ENCODE measurements at regions of chr9 and their contacts with region 1.

Region 1: GRCh38 chr9:113410207-113410864 is at the starts of genes C9orf43 and POLE3:
- DNase-seq: peak; percentile 92 to 98 (median 94)
- ATAC-seq: peak; percentile 94
- H3K4me3 ChIP-seq: peak within 1 kb of the TSS; percentile 88
- H3K27ac ChIP-seq: peak within 1 kb of the TSS; percentile 87
- H3K4me1 ChIP-seq: peaks cover 12 to 22% of the 10 kb centered on the region in 2 experiments; a peak in 4 of 5 replicates
- H3K27me3 ChIP-seq: no peaks in the 10 kb centered on the region
- CTCF ChIP-seq: peak in 1 of 3 experiments; percentile 32; a peak in 1 of 6 replicates
- EP300 ChIP-seq: peak; percentile 52
- POLR2A ChIP-seq: peak; percentile 85
- RAD21 ChIP-seq: peak in 1 of 2 experiments; percentile 17; a peak in 1 of 4 replicates
- polyA plus RNA-seq, gene C9orf43: 0.21 to 0.31 TPM
- polyA plus RNA-seq, gene POLE3: 52.6 to 110 TPM

Region 2: GRCh38 chr9:112559629-112560413 is 850.5 kb before region 1 on chr9:
- CTCF ChIA-PET with region 1: no interaction called
- POLR2A ChIA-PET with region 1: no interaction called
- in situ Hi-C with region 1: no loop called
- intact Hi-C with region 1: loop called (anchors 5 kb)
- DNase-seq: peak in 2 of 4 experiments; percentile 58 to 84
- ATAC-seq: peak; percentile 94
- H3K4me3 ChIP-seq: no peak overlapping the region
- H3K27ac ChIP-seq: peak overlapping the region; percentile 61
- H3K4me1 ChIP-seq: peaks cover 17 to 25% of the 10 kb centered on the region in 2 experiments
- H3K27me3 ChIP-seq: no peaks in the 10 kb centered on the region
- CTCF ChIP-seq: no peak
- EP300 ChIP-seq: peak; percentile 51; the same call in 1 of the 2 replicates
- POLR2A ChIP-seq: no peak
- RAD21 ChIP-seq: no peak

Region 3: DNA sequence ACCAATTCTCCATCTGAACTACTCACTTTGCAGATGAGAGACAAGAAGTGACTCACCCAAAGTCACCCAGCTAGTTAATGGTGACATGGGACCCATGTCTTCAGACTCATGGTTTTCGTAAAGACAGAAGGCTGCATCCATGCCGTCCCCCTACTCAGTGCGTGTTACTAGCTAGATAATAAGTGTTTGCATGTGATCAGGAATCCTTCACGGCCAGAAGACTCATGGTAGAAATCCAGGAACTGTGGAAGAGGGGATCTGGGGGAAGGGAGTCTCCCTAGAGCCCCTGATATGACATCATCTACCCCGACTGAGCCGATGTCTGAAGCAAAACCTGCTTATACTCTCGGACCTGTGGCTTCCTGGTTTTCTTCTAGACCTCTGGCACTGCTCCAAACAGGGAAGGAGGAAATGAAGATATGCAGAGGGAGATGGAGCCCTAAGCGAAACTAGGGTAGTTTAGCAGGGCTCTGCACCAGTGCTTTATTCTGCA is 110.5 kb before region 1 on chr9:
- CTCF ChIA-PET with region 1: no interaction called
- POLR2A ChIA-PET with region 1: interaction called, 3 read pairs
- in situ Hi-C with region 1: loop called (anchors 5 kb)
- intact Hi-C with region 1: no loop called
- DNase-seq: peak; percentile 22 to 80 (median 42)
- ATAC-seq: peak; percentile 70
- H3K4me3 ChIP-seq: no peak overlapping the region
- H3K27ac ChIP-seq: no peak overlapping the region
- H3K4me1 ChIP-seq: peaks cover 19 to 21% of the 10 kb centered on the region in 2 experiments; a peak in 4 of 5 replicates
- H3K27me3 ChIP-seq: peaks cover 15 to 29% of the 10 kb centered on the region in 2 experiments
- CTCF ChIP-seq: no peak
- EP300 ChIP-seq: no peak
- POLR2A ChIP-seq: no peak
- RAD21 ChIP-seq: no peak

Region 4: GRCh38 chr9:113355040-113355596 is 55.2 kb before region 1 on chr9:
- CTCF ChIA-PET with region 1: interaction called, 4 read pairs
- POLR2A ChIA-PET with region 1: interaction called, 6 read pairs
- in situ Hi-C with region 1: no loop called
- intact Hi-C with region 1: loop called (anchors 1 kb)
- DNase-seq: peak in 2 of 4 experiments; percentile 61 to 68
- ATAC-seq: peak; percentile 89
- H3K4me3 ChIP-seq: no peak overlapping the region
- H3K27ac ChIP-seq: no peak overlapping the region
- H3K4me1 ChIP-seq: peaks cover 0 to 2% of the 10 kb centered on the region in 2 experiments; a peak in 2 of 5 replicates
- H3K27me3 ChIP-seq: peaks cover 2 to 13% of the 10 kb centered on the region in 2 experiments; a peak in 2 of 5 replicates
- CTCF ChIP-seq: peak; percentile 68 to 79 (median 73)
- EP300 ChIP-seq: no peak
- POLR2A ChIP-seq: no peak
- RAD21 ChIP-seq: peak; percentile 71 to 88

Region 5: DNA sequence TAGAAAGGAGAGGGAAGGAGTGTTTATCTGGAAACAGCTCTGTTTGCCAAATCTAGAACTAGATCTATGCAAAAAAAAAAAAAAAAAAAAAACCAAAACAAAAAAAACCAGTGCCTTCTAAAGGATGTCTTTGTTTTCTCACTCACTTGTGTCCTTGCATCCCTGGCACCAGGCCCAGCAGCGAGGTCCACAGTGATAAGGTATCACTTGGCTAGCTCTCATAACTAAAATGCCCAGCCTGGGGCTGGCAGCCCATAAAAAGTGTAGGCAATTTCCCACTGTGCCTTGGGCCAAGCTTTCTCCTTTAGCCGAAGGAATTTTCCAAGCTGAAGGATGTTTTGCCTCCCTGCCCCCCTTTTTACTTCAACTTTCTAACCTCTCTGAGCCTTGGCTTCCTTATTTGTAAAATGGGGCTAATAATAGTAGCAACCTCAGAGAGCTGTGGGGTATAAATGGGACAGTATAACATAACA is 74.0 kb after region 1 on chr9:
- CTCF ChIA-PET with region 1: no interaction called
- POLR2A ChIA-PET with region 1: no interaction called
- in situ Hi-C with region 1: no loop called
- intact Hi-C with region 1: no loop called
- DNase-seq: no peak
- ATAC-seq: no peak
- H3K4me3 ChIP-seq: no peak overlapping the region
- H3K27ac ChIP-seq: no peak overlapping the region
- H3K4me1 ChIP-seq: no peaks in the 10 kb centered on the region
- H3K27me3 ChIP-seq: peaks cover 31 to 62% of the 10 kb centered on the region in 2 experiments
- CTCF ChIP-seq: no peak
- EP300 ChIP-seq: no peak
- POLR2A ChIP-seq: no peak
- RAD21 ChIP-seq: no peak